Activated CD4-positive, alpha-beta memory T cell treated with anti-CD3 and anti-CD28 coated beads, Interleukin-2, amount 10 ng/mL, durations not matched to agents 7 days and 5 days (primary cell): ENCODE measurements at regions of chr3 and their contacts with region 1.

Region 1: DNA sequence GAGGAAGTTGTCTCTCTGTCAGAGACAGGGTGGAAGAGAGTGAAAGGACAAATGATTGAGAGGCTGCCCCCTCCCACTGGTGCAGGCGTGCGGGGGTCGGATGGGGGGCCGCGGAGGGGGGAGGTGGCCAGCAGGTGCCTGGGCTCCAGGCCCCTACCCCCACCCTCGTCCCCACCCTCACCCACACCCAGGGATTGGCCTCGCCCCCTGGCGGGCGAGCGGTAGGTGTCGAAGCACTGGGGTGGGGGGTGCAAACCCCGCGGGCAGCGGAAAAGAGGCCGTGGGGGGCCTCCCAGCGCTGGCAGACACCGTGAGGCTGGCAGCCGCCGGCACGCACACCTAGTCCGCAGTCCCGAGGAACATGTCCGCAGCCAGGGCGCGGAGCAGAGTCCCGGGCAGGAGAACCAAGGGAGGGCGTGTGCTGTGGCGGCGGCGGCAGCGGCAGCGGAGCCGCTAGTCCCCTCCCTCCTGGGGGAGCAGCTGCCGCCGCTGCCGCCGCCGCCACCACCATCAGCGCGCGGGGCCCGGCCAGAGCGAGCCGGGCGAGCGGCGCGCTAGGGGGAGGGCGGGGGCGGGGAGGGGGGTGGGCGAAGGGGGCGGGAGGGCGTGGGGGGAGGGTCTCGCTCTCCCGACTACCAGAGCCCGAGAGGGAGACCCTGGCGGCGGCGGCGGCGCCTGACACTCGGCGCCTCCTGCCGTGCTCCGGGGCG is at the start of gene KAT2B:
- DNase-seq: peak; percentile 83
- H3K4me3 Mint-ChIP-seq: peak within 1 kb of the TSS; percentile 90
- H3K27ac Mint-ChIP-seq: peak within 1 kb of the TSS; percentile 97
- H3K4me1 Mint-ChIP-seq: peaks cover 51% of the 10 kb centered on the region
- H3K27me3 Mint-ChIP-seq: no peaks in the 10 kb centered on the region
- total RNA-seq, gene KAT2B: 129 to 134 TPM

Region 2: GRCh38 chr3:19946832-19947548 is 92.9 kb before region 1 on chr3 and contains the start of gene RAB5A:
- CTCF ChIA-PET with region 1: interaction called, 4 read pairs
- POLR2A ChIA-PET with region 1: interaction called, 41 read pairs
- DNase-seq: peak; percentile 98
- H3K4me3 Mint-ChIP-seq: peak within 1 kb of the TSS; percentile 89
- H3K27ac Mint-ChIP-seq: peak within 1 kb of the TSS; percentile 99
- H3K4me1 Mint-ChIP-seq: peaks cover 40% of the 10 kb centered on the region
- H3K27me3 Mint-ChIP-seq: no peaks in the 10 kb centered on the region
- total RNA-seq, gene RAB5A: 60.0 to 64.5 TPM

Region 3: DNA sequence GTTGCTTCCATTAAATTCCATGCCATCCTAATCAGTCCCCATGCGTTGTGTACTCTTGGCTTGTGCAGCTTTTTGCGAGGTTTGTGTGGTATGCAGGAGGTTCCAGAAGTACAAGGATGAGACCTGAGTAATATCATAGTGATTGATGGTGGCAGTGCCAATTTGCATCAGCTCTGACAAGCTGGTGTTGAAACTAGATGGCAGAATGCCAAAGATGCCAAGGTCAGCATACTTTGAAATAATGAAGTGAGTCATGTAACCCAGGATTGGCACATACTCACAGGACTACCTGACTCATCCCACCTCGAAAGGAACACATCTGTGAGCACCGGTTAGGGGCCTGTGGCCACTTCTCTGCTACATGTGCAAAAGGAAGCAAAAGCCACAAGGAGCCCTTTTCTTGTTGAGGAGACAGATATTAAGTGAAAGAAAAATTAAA is 14.6 kb after region 1 on chr3:
- CTCF ChIA-PET with region 1: interaction called, 31 read pairs
- POLR2A ChIA-PET with region 1: interaction called, 139 read pairs
- DNase-seq: peak; percentile 84
- H3K4me3 Mint-ChIP-seq: no peak overlapping the region
- H3K27ac Mint-ChIP-seq: no peak overlapping the region
- H3K4me1 Mint-ChIP-seq: peaks cover 37% of the 10 kb centered on the region
- H3K27me3 Mint-ChIP-seq: no peaks in the 10 kb centered on the region

Region 4: GRCh38 chr3:20060974-20061685 is 21.2 kb after region 1 on chr3:
- CTCF ChIA-PET with region 1: interaction called, 31 read pairs
- POLR2A ChIA-PET with region 1: interaction called, 139 read pairs
- DNase-seq: peak; percentile 37
- H3K4me3 Mint-ChIP-seq: peak overlapping the region; percentile 44
- H3K27ac Mint-ChIP-seq: peak overlapping the region; percentile 66
- H3K4me1 Mint-ChIP-seq: peaks cover 55% of the 10 kb centered on the region
- H3K27me3 Mint-ChIP-seq: no peaks in the 10 kb centered on the region

Region 5: GRCh38 chr3:20185701-20186598 is 146.0 kb after region 1 on chr3 and contains the start of gene SGO1:
- CTCF ChIA-PET with region 1: interaction called, 25 read pairs
- POLR2A ChIA-PET with region 1: interaction called, 119 read pairs
- DNase-seq: peak; percentile 100
- H3K4me3 Mint-ChIP-seq: no peak within 1 kb of the TSS
- H3K27ac Mint-ChIP-seq: no peak within 1 kb of the TSS
- H3K4me1 Mint-ChIP-seq: peaks cover 31% of the 10 kb centered on the region
- H3K27me3 Mint-ChIP-seq: no peaks in the 10 kb centered on the region
- total RNA-seq, gene SGO1: 38.3 to 39.4 TPM

Region 6: DNA sequence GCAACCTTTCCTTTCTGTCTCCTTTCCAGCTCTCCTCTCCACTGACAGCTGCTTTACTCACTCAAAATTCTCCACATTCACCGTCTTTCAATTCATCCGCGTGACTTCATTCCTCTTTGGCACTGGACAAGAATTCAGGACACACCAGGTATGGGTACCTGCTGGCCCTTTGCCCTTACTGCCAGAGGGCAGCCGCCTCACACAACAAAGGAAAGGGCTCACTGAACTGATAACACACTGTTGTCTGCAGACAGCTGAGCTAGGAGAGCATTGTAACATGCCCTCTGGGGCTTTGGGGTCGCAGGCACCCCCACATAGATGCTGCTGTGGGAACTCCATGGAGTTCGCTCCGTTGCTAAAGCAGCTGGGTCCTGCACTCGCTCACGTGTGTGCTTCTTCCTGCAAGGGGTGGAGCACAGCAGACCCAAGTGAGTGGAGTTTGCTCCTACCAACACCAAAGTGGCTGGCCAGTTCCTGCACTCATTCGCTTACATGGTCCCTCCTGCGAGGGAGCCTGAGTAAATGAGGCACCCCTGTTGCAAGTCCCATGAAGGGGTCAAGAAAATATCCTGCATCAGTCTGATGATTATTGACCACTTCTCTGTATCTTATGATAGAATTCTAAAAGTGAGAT is 225.1 kb after region 1 on chr3:
- CTCF ChIA-PET with region 1: no interaction called
- POLR2A ChIA-PET with region 1: no interaction called
- DNase-seq: no peak
- H3K4me3 Mint-ChIP-seq: no peak overlapping the region
- H3K27ac Mint-ChIP-seq: no peak overlapping the region
- H3K4me1 Mint-ChIP-seq: peaks cover 2% of the 10 kb centered on the region
- H3K27me3 Mint-ChIP-seq: no peaks in the 10 kb centered on the region